CD4-positive, alpha-beta T cell (primary cell): ENCODE measurements at regions of chr12 and their contacts with region 1.

Region 1: DNA sequence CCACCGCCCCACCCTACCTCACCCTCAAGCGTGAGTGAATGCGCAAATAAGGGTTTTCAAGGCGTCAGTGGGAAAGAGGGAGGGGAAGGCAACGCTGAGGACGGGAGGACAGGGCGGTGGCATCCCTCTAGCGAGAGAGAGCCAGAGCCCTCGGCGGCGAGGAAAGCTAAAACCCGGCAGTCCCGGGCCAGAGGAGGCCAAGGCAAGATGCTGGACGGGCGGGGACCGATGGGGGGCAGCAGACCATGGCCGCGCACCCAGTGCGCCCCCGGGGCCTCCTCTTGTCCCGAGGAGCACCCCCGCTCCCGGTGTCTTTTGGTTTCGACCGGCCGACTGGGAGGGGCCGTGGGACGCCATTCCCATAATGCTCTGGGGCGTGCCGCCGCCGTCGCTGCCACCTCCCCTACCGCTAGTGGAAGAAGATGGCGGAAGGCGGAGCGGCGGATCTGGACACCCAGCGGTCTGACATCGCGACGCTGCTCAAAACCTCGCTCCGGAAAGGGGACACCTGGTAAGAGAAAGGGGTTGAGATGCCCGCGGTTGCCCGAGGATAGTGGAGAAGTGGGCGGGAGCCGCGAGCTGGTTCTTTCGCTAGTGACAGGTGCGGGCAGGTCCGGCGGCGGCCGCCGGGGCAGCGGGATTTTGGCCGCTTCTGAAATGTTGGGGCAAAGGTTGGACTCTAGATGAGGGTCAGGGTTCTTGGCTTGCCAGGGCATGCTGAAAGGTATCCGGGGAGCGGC is at the start of gene USP15:
- DNase-seq: peak; percentile 93 to 97 (median 95)
- ATAC-seq: peak; percentile 78
- H3K4me3 ChIP-seq: peak within 1 kb of the TSS; percentile 81
- H3K4me3 Mint-ChIP-seq: peak within 1 kb of the TSS; percentile 98
- H3K27ac ChIP-seq: peak within 1 kb of the TSS; percentile 97
- H3K27ac Mint-ChIP-seq: peak within 1 kb of the TSS; percentile 98
- H3K4me1 ChIP-seq: peaks cover 13% of the 10 kb centered on the region
- H3K4me1 Mint-ChIP-seq: peaks cover 77% of the 10 kb centered on the region
- H3K27me3 ChIP-seq: no peaks in the 10 kb centered on the region
- H3K27me3 Mint-ChIP-seq: no peaks in the 10 kb centered on the region
- CTCF ChIP-seq: peak; percentile 62
- total RNA-seq, gene USP15: 212 to 218 TPM

Region 2: DNA sequence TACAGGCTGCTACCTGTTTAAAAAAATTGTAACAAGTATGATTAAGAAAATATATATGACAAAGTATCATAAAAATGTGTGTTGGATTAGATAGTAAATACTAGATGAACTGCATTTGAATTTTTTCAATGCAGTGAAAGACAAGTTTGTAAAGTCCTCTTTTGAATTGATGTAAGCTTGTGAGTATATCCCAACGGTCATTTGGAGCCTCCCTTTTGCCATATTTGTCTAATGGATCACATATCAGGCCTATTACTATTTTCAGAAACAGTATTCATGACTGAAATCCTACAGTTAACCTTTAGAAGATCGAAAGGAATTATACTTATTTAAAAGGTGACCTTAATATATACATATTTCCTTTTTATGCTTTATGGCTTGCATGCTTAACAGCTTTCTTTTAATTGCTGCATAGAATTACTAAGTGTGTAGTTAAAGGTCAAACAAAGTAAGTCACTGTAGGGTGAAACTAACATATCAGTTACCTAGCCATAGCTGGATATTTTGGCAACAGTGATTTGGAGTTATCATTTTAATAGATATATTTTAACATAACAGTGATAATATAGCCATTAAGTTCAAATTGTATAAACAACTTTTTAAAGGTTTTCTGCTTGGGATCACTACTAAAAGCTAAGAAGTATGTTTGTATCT is 53.7 kb after region 1 on chr12:
- CTCF ChIA-PET with region 1: interaction called, 3 read pairs
- POLR2A ChIA-PET with region 1: no interaction called
- intact Hi-C with region 1: loop called (anchors 5 kb)
- DNase-seq: no peak
- ATAC-seq: no peak
- H3K4me3 ChIP-seq: no peak overlapping the region
- H3K4me3 Mint-ChIP-seq: no peak overlapping the region
- H3K27ac ChIP-seq: no peak overlapping the region
- H3K27ac Mint-ChIP-seq: no peak overlapping the region
- H3K4me1 ChIP-seq: no peaks in the 10 kb centered on the region
- H3K4me1 Mint-ChIP-seq: peaks cover 64% of the 10 kb centered on the region
- H3K27me3 ChIP-seq: no peaks in the 10 kb centered on the region
- H3K27me3 Mint-ChIP-seq: no peaks in the 10 kb centered on the region
- CTCF ChIP-seq: peak; percentile 10